ENCODE measurements at regions of chr15 and their contacts with region 1.

Region 1: DNA sequence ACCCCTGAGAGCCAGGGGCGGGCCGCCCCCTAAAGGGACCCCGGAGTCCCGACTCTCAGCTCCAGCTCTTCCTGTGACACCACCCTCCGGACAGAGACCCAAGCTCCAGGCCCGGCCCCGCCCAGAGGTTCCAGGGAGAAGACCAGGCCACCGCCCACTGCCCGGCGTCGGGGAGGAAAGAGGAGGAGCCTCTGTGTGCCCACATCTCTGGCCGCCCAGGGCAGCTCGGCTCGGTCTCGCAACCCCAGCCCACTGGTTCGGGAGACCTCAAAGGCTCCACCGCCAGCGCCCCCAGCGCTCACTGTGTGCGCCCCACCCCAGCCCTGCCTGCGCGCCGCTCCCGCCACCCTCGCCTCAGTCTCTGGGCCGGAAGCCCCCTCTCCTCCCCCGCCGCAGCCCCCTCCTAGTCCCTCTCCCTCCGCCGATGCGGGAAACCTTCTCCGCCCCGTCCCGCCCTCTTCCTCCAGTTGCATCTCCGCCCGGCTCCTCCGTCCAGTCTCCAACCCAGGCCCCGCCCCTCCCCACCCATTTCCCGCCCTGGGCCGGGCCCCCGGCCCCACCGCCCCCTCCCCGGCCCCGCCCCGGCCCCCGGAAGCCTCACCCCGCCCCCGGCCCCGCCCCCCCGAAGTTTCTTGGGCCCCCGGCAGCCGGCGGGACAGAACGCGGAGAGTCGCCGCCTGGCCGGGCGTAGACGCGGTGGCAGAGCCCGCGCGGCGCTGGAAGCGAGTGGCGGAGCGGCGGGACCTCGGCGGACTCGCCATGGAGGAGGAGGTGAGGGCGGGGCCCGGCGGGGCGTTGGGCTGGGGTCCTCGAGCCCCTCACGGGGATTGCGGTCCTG is at the start of gene PLEKHO2:
- DNase-seq: peak; percentile 87 to 98
- H3K4me3 ChIP-seq: peak within 1 kb of the TSS; percentile 88 to 92
- H3K27ac ChIP-seq: peak within 1 kb of the TSS; percentile 92 to 98
- H3K4me1 ChIP-seq: peaks cover 18 to 34% of the 10 kb centered on the region in 2 donors
- H3K27me3 ChIP-seq: no peaks in the 10 kb centered on the region
- CTCF ChIP-seq: peak in 1 of 3 experiments; percentile 13
- total RNA-seq, gene PLEKHO2: 41.4 TPM

Region 2: GRCh38 chr15:64825431-64826294 is 15.8 kb before region 1 on chr15 and contains the start of gene PIF1:
- intact Hi-C with region 1: loop called (anchors 2 kb)
- DNase-seq: peak; percentile 79 to 97
- H3K4me3 ChIP-seq: peak within 1 kb of the TSS; percentile 72 to 76
- H3K27ac ChIP-seq: peak within 1 kb of the TSS; percentile 4 to 35
- H3K4me1 ChIP-seq: peaks cover 7 to 20% of the 10 kb centered on the region in 2 donors
- H3K27me3 ChIP-seq: no peaks in the 10 kb centered on the region
- CTCF ChIP-seq: no peak
- total RNA-seq, gene PIF1: not detected

Region 3: GRCh38 chr15:64893481-64894394 is 52.3 kb after region 1 on chr15:
- intact Hi-C with region 1: loop called (anchors 5 kb)
- DNase-seq: peak; percentile 88 to 96
- H3K4me3 ChIP-seq: peak overlapping the region; percentile 35 to 54
- H3K27ac ChIP-seq: peak overlapping the region; percentile 78 to 80
- H3K4me1 ChIP-seq: peaks cover 7 to 28% of the 10 kb centered on the region in 2 donors
- H3K27me3 ChIP-seq: no peaks in the 10 kb centered on the region
- CTCF ChIP-seq: no peak

Region 4: GRCh38 chr15:64989416-64990167 is 148.1 kb after region 1 on chr15 and contains the start of gene SPG21:
- intact Hi-C with region 1: loop called (anchors 1 kb)
- DNase-seq: peak; percentile 64 to 95
- H3K4me3 ChIP-seq: peak within 1 kb of the TSS; percentile 92 to 98
- H3K27ac ChIP-seq: peak within 1 kb of the TSS; percentile 94 to 96
- H3K4me1 ChIP-seq: no peaks in the 10 kb centered on the region
- H3K27me3 ChIP-seq: no peaks in the 10 kb centered on the region
- CTCF ChIP-seq: no peak
- total RNA-seq, gene SPG21: 41.5 TPM

Region 5: GRCh38 chr15:65049418-65049840 is 208.0 kb after region 1 on chr15:
- intact Hi-C with region 1: no loop called
- DNase-seq: peak; percentile 72 to 93
- H3K4me3 ChIP-seq: peak overlapping the region in 1 of 2 donors; percentile 43
- H3K27ac ChIP-seq: peak overlapping the region in 1 of 2 donors; percentile 46
- H3K4me1 ChIP-seq: peaks cover 0 to 4% of the 10 kb centered on the region in 2 donors
- H3K27me3 ChIP-seq: no peaks in the 10 kb centered on the region
- CTCF ChIP-seq: no peak